Mucosa of descending colon (tissue), 3 donors: ENCODE measurements at regions of chr6 and their contacts with region 1.

Region 1: GRCh38 chr6:63923139-63923739 is 287.6 kb downstream of the PHF3 start:
- DNase-seq: no peak
- ATAC-seq: peak; percentile 64
- H3K4me3 ChIP-seq: no peak overlapping the region
- H3K4me1 ChIP-seq: peaks cover 13% of the 10 kb centered on the region
- CTCF ChIP-seq: peak; percentile 40

Region 2: DNA sequence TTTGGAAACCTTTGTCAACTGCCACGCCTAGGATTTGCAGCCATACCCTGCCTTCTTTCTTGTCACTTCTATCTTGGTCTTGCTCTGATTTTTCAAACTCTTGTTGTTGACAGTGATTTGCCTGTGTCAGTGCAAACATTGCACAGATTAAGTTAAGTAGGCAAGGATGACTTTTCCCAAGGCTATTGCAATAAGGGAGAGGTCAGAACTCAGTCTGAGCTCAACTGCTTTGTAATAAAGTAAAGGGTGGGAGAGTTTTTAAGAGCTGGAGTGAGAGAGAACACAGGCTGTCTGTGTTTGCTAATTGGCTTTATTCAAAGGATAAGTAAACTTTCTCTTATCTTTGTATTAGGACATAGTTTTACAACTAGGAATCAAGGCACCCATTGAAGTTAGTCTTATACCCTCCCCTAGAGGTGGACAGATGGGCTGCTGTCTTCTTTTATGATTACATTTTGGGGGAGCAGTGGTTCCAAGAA is 161.0 kb after region 1 on chr6:
- intact Hi-C with region 1: loop called in 1 of 2 experiments (anchors 5 kb)
- DNase-seq: peak in 1 of 3 donors; percentile 32
- ATAC-seq: peak; percentile 96
- H3K4me3 ChIP-seq: no peak overlapping the region
- H3K4me1 ChIP-seq: peaks cover 8% of the 10 kb centered on the region
- CTCF ChIP-seq: no peak

Region 3: GRCh38 chr6:64254558-64254957 is 331.3 kb after region 1 on chr6:
- intact Hi-C with region 1: no loop called
- DNase-seq: no peak
- ATAC-seq: no peak
- H3K4me3 ChIP-seq: no peak overlapping the region
- H3K4me1 ChIP-seq: no peaks in the 10 kb centered on the region
- CTCF ChIP-seq: no peak

Region 4: DNA sequence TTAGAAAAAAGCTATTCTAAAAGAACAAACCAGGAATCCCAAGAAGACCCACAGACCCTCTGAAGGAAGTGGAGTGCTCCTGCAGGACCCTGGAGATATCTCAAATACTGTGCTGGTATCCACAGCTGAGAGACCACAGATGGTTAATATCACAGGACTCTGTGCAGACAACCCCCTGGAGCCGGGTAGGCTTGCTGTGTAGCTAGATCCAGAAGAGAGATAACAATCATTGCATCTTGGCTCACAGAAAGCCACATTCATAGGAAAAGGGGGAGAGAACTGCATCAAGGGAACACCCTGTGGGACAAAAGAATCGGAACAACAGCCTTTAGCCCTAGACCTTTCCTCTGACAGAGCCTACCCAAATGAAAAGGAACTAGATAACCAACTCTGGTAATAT is 401.9 kb after region 1 on chr6:
- intact Hi-C with region 1: loop called in 1 of 2 experiments (anchors 10 kb)
- DNase-seq: no peak
- ATAC-seq: no peak
- H3K4me3 ChIP-seq: no peak overlapping the region
- H3K4me1 ChIP-seq: no peaks in the 10 kb centered on the region
- CTCF ChIP-seq: no peak